Caco-2 (cell line): ENCODE measurements at regions of chr10 and their contacts with region 1.

Region 1: GRCh38 chr10:24642622-24643417 is 80.9 kb downstream of the ARHGAP21 start:
- DNase-seq: peak in 1 of 2 experiments; percentile 76
- H3K4me3 ChIP-seq: no peak overlapping the region
- H3K4me3 Mint-ChIP-seq: no peak overlapping the region
- H3K27ac Mint-ChIP-seq: no peak overlapping the region
- H3K4me1 ChIP-seq: peaks cover 5% of the 10 kb centered on the region
- H3K4me1 Mint-ChIP-seq: no peaks in the 10 kb centered on the region
- H3K27me3 ChIP-seq: no peaks in the 10 kb centered on the region
- H3K27me3 Mint-ChIP-seq: no peaks in the 10 kb centered on the region
- CTCF ChIP-seq: peak; percentile 85 to 89

Region 2: GRCh38 chr10:24680647-24681524 is 38.1 kb after region 1 on chr10:
- CTCF ChIA-PET with region 1: no interaction called
- POLR2A ChIA-PET with region 1: no interaction called
- intact Hi-C with region 1: loop called (anchors 1 kb)
- DNase-seq: peak in 1 of 2 experiments; percentile 64
- H3K4me3 ChIP-seq: no peak overlapping the region
- H3K4me3 Mint-ChIP-seq: peak overlapping the region; percentile 58
- H3K27ac Mint-ChIP-seq: peak overlapping the region; percentile 20
- H3K4me1 ChIP-seq: peaks cover 25% of the 10 kb centered on the region
- H3K4me1 Mint-ChIP-seq: peaks cover 19% of the 10 kb centered on the region
- H3K27me3 ChIP-seq: no peaks in the 10 kb centered on the region
- H3K27me3 Mint-ChIP-seq: no peaks in the 10 kb centered on the region
- CTCF ChIP-seq: no peak

Region 3: DNA sequence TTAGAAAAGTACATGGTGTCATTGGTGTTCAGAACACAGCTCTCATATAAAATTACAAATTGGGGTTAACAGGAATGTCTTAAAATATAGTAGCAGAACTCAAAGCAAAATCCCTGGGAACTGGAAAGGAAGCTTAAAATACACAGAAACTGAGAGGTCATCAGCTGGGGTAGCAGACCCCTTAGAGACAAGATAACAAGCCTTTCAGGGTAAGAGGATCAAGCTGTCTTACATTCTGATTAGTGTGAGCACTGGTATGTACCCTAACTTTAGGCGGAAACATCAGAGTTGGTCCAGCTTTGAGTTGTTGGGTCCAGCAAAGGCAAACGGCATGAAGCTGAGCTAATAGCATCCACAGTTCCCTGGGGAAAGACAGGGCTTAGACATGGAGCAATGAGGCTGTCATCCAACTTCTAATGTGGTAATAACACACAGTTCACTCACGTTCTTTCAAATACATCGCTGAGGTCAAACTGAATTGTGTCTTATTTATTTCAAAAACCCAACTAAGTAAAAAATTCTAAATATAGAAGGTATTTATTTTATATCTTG is 48.2 kb after region 1 on chr10:
- CTCF ChIA-PET with region 1: no interaction called
- POLR2A ChIA-PET with region 1: no interaction called
- intact Hi-C with region 1: no loop called
- DNase-seq: no peak
- H3K4me3 ChIP-seq: no peak overlapping the region
- H3K4me3 Mint-ChIP-seq: no peak overlapping the region
- H3K27ac Mint-ChIP-seq: no peak overlapping the region
- H3K4me1 ChIP-seq: peaks cover 3% of the 10 kb centered on the region; the same call in 1 of the 2 replicates
- H3K4me1 Mint-ChIP-seq: peaks cover 12% of the 10 kb centered on the region
- H3K27me3 ChIP-seq: no peaks in the 10 kb centered on the region
- H3K27me3 Mint-ChIP-seq: no peaks in the 10 kb centered on the region
- CTCF ChIP-seq: no peak

Region 4: DNA sequence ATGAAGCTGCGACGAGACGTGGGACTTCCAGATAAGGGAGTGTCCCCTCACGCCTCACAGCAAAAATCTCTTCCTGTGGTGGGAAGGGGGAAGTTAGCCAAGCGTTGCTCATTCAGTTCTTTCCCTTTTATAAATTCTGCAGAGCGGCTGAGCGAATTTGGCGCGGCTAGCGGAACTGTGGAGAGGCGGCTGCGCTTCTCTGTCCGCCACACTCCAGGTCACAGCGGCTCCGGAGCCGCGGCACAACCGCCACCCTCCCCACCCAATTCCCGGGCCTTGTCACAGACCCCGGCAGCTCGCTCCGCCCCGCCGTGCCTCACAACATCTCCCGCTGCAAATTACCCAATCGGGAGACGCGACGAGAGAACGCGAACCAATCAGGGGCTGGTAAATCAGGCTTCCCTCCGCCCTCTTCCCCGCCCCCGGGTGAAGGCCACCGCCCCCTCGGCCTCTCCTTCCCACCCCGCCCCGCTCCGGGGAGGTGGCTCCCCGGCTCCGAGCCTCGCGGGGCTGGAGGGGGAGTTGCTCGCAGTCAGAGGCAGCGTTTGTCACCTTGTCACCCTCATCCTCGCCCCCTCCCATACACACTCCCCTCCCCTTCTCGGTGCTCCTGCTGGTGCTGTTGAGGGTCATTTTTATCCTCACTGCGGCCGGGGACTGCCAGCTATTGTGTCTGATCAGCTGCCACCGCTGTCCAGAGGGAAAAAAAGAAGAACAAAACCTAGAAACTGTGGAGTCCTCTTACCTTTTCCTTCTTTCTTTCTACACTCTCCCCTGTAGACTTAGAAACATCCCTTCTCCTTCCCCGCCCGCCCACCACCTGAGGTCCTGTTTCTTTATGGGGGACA is 81.8 kb after region 1 on chr10:
- CTCF ChIA-PET with region 1: interaction called, 15 read pairs
- POLR2A ChIA-PET with region 1: no interaction called
- intact Hi-C with region 1: loop called (anchors 1 kb)
- DNase-seq: peak; percentile 99 to 100
- H3K4me3 ChIP-seq: peak overlapping the region; percentile 85
- H3K4me3 Mint-ChIP-seq: no peak overlapping the region
- H3K27ac Mint-ChIP-seq: peak overlapping the region; percentile 86
- H3K4me1 ChIP-seq: peaks cover 8% of the 10 kb centered on the region
- H3K4me1 Mint-ChIP-seq: peaks cover 21% of the 10 kb centered on the region
- H3K27me3 ChIP-seq: no peaks in the 10 kb centered on the region
- H3K27me3 Mint-ChIP-seq: no peaks in the 10 kb centered on the region
- CTCF ChIP-seq: no peak

Region 5: DNA sequence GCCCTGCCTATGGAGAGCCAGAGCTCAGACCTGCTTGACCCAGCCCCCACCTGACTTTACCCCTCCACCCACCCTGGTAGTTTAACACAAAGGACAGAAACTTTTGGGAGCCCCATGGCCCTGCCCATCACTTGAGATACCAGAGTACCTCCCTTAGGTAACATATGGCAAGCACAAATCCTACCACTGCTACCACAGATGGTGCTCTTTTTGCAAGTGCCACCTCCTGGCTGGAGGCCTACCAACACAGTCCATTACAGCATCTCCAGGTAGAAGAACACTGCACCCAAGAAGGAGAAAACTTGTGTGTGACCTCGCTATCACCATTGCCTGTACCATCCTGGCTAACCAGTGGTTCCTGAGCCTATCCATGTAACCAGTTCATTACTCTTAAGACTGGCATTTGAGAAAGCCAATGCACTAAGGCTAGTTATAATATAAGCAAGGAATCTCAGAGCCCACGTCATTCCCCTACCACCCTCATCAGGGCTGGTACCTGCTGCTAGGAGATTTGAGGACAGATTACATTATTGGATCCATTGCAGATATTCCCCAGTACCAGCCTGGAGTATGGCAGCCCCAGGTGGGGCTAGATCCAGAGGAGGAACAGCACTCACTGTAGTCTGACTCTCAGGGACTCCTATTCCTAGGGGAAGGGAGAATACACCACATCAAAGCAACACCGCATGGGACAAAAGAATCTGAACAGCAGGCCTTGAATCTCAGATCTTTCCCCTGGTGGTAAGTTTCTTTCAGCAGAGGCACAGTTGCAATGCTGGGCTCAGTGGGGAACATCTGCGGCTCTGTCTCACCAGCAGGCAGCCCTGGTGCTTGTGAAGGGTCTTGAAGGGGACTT is 191.7 kb after region 1 on chr10:
- CTCF ChIA-PET with region 1: no interaction called
- POLR2A ChIA-PET with region 1: no interaction called
- intact Hi-C with region 1: loop called (anchors 10 kb)
- DNase-seq: no peak
- H3K4me3 ChIP-seq: no peak overlapping the region
- H3K4me3 Mint-ChIP-seq: no peak overlapping the region
- H3K27ac Mint-ChIP-seq: no peak overlapping the region
- H3K4me1 ChIP-seq: 0 out of 2 replicates have a peak, but pooled peaks cover 5% of the 10 kb centered on the region
- H3K4me1 Mint-ChIP-seq: peaks cover 12% of the 10 kb centered on the region
- H3K27me3 ChIP-seq: no peaks in the 10 kb centered on the region
- H3K27me3 Mint-ChIP-seq: no peaks in the 10 kb centered on the region
- CTCF ChIP-seq: no peak

Region 6: DNA sequence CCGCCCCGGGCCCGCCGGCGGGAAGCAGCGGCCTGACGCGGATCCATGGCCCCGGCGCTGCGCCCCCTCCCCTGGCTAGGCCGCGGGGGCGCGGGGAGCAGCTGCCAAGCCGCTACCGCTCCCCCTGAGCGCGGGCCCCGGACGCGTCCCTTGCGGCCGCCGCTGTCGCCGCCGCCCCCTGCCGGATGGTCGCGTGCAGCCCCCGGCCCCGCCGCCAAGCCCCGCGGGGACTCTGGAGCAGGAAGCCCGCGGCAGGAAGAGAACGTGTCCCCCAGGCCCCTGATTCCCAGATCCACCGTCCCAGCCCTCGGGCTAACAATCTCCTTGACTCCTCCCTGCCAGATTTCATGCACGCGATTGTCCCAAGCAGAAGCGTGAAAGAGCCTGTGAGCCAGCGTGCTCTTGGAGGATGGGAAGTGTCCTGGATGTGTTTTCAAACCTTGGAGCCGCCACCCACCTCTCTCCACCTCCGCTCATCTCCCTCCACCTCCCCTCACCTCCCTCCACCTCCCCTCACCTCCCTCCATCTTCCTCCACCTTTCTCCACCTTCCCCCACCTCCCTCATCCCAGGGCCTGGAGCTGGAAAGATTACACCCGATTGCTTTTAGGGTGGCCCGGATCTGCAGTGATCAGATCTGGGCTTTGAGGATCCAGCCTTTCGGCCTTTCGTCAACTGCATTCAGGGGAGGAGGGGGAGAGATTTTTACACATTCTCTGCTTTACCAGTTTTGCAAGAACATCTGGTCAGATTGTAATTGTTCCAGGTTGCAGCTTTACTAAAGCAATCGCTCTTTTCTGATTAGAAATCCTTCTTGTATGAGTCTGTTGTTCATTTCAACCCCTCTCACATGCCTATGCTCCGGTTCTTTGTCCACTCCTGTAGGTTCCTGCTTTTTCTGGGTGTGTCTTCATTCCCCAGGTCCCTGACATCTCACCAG is 310.2 kb after region 1 on chr10:
- CTCF ChIA-PET with region 1: interaction called, 10 read pairs
- POLR2A ChIA-PET with region 1: no interaction called
- intact Hi-C with region 1: loop called (anchors 1 kb)
- DNase-seq: peak; percentile 85 to 91
- H3K4me3 ChIP-seq: peak overlapping the region; percentile 97
- H3K4me3 Mint-ChIP-seq: peak overlapping the region; percentile 84
- H3K27ac Mint-ChIP-seq: peak overlapping the region; percentile 90
- H3K4me1 ChIP-seq: peaks cover 32% of the 10 kb centered on the region
- H3K4me1 Mint-ChIP-seq: peaks cover 23% of the 10 kb centered on the region
- H3K27me3 ChIP-seq: no peaks in the 10 kb centered on the region
- H3K27me3 Mint-ChIP-seq: no peaks in the 10 kb centered on the region
- CTCF ChIP-seq: peak; percentile 47 to 72

Region 7: GRCh38 chr10:24989867-24990266 is 347.0 kb after region 1 on chr10:
- CTCF ChIA-PET with region 1: interaction called, 6 read pairs
- POLR2A ChIA-PET with region 1: no interaction called
- intact Hi-C with region 1: loop called (anchors 1 kb)
- DNase-seq: no peak
- H3K4me3 ChIP-seq: no peak overlapping the region
- H3K4me3 Mint-ChIP-seq: no peak overlapping the region
- H3K27ac Mint-ChIP-seq: no peak overlapping the region
- H3K4me1 ChIP-seq: no peaks in the 10 kb centered on the region
- H3K4me1 Mint-ChIP-seq: no peaks in the 10 kb centered on the region
- H3K27me3 ChIP-seq: no peaks in the 10 kb centered on the region
- H3K27me3 Mint-ChIP-seq: no peaks in the 10 kb centered on the region
- CTCF ChIP-seq: peak in 1 of 2 experiments; percentile 17

Region 8: DNA sequence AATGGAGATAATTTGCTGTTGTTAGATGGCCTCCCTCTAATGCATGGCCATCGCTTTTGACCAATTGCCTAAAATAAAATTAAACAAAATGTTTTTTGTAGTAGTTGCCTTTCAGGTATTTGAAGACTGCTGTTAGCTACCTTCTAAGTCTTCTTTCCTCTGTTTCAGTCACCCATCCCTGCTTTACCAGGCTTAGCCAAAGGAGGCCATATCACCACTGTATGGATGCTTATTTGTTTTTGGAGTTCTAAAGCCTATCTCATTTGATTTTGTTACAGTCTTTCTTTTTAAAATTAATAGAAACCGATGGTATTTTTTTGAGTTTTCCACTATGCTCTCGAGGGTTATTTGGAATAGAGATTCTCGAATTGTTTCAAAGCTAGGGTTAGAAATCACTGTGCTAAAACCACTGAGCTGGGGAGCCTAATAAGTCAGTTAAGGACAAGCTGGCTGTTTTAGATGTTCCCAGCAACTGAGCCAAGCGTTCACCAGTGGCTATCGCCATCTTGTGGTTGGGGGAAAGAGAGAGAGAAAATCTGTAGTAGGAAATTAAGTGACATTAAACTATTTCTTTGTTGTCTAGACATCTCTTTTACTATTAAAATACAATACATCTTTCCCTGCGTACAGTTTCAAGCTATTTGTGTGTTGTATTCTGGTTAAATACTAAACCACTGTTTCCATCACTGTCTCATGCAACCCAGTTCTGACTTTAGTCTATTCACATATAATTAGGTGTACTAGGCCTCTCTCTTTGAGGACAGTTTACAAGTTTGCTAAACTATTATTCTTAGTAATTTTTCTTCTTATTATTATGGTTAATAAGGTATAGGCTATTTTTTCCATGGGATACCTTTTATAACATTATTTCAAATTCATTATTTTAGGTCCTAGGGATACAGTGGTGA is 584.2 kb after region 1 on chr10:
- CTCF ChIA-PET with region 1: no interaction called
- POLR2A ChIA-PET with region 1: no interaction called
- intact Hi-C with region 1: loop called (anchors 1 kb)
- DNase-seq: peak; percentile 57 to 71
- H3K4me3 ChIP-seq: no peak overlapping the region
- H3K4me3 Mint-ChIP-seq: no peak overlapping the region
- H3K27ac Mint-ChIP-seq: no peak overlapping the region
- H3K4me1 ChIP-seq: no peaks in the 10 kb centered on the region
- H3K4me1 Mint-ChIP-seq: no peaks in the 10 kb centered on the region
- H3K27me3 ChIP-seq: no peaks in the 10 kb centered on the region
- H3K27me3 Mint-ChIP-seq: peaks cover 7% of the 10 kb centered on the region
- CTCF ChIP-seq: peak; percentile 90 to 91